Mammary epithelial cell (primary cell): ENCODE measurements at regions of chr4 and their contacts with region 1.

Region 1: DNA sequence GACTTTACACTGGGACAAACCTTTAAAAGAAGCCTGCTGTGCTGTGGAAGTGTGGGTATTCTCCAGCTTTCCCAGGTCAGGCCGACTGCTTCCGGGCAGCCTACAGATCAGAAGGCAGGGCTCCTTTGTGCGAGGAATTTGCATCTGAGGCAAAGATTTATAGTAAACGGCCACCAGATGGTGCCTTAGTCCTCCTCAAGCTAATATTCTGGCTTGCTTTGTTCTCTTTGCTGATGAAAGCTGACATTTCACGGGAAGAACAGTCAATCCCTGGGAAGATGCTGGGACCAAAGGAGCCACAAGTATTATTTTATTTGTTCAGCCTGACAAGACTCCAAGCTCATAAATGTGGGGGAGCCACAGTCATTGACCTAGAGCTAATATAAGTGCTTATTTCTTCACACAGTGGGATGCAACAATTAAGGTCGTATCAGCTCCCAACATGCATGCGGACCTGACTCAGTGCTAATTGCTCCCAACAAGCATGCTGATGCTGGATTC is 120.7 kb upstream of the TRIM2 start:
- DNase-seq: peak; percentile 75
- H3K4me3 ChIP-seq: no peak overlapping the region
- H3K27ac ChIP-seq: no peak overlapping the region
- H3K4me1 ChIP-seq: peaks cover 21% of the 10 kb centered on the region
- H3K27me3 ChIP-seq: no peaks in the 10 kb centered on the region
- CTCF ChIP-seq: peak; percentile 58 to 65

Region 2: GRCh38 chr4:152843481-152844090 is 239.9 kb before region 1 on chr4:
- CTCF ChIA-PET with region 1: interaction called, 4 read pairs
- dilution Hi-C with region 1: no loop called
- in situ Hi-C with region 1: loop called in 1 of 2 experiments (anchors 10 kb)
- intact Hi-C with region 1: loop called (anchors 1 kb)
- DNase-seq: no peak
- H3K4me3 ChIP-seq: no peak overlapping the region
- H3K27ac ChIP-seq: no peak overlapping the region
- H3K4me1 ChIP-seq: no peaks in the 10 kb centered on the region
- H3K27me3 ChIP-seq: no peaks in the 10 kb centered on the region
- CTCF ChIP-seq: no peak

Region 3: GRCh38 chr4:153122855-153123254 is 39.4 kb after region 1 on chr4:
- CTCF ChIA-PET with region 1: interaction called, 9 read pairs
- dilution Hi-C with region 1: no loop called
- in situ Hi-C with region 1: loop called (anchors 5 kb)
- intact Hi-C with region 1: loop called (anchors 1 kb)
- DNase-seq: no peak
- H3K4me3 ChIP-seq: no peak overlapping the region
- H3K27ac ChIP-seq: no peak overlapping the region
- H3K4me1 ChIP-seq: no peaks in the 10 kb centered on the region
- H3K27me3 ChIP-seq: no peaks in the 10 kb centered on the region
- CTCF ChIP-seq: no peak